GM13976 (cell line): ENCODE measurements at regions of chr7 and their contacts with region 1.

Region 1: DNA sequence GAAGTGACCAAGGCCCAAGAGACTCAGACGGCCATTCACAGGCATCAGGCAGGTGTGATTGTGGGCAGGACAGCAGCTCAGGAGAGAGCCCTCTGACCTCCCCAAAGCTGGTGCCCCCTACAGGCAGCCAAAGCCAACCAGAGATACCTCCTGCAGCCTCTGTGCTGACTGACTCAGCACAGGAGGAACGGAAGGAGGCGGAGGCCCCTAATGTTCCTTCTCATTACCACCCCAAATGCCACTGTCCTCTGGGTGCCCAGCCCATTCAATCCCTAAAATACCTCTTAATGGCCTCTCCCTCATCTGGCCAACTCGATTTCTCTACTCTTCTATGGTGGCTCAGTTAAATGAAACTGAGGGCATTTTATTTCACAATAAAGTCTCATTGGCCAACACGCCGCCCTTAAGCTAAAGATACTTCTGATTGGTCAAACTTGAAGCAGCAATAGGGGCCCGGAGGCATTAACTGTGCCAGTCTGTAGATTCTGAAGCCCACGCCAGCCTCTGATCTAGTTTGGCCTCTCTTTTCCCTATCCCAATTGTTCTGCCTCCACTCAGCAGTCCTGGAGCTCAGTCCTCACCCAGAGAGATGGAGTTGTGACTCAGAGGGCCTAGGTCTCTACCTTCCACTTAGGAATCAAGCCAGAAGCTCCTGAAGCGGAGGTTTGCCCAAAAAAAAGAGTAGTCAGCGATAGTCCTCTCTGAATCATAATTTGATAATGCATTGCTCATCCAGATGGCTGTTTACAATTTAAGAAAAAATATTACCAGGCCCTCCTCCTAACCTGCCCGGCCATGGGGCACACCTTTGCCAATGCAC is 1.2 kb downstream of the CYREN start:
- DNase-seq: peak; percentile 80
- CTCF ChIP-seq: peak; percentile 73

Region 2: GRCh38 chr7:134992626-134993179 is 176.6 kb before region 1 on chr7:
- in situ Hi-C with region 1: loop called (anchors 5 kb)
- DNase-seq: peak; percentile 55
- CTCF ChIP-seq: no peak